CD8-positive, alpha-beta T cell (primary cell): ENCODE measurements at regions of chr19 and their contacts with region 1.

Region 1: DNA sequence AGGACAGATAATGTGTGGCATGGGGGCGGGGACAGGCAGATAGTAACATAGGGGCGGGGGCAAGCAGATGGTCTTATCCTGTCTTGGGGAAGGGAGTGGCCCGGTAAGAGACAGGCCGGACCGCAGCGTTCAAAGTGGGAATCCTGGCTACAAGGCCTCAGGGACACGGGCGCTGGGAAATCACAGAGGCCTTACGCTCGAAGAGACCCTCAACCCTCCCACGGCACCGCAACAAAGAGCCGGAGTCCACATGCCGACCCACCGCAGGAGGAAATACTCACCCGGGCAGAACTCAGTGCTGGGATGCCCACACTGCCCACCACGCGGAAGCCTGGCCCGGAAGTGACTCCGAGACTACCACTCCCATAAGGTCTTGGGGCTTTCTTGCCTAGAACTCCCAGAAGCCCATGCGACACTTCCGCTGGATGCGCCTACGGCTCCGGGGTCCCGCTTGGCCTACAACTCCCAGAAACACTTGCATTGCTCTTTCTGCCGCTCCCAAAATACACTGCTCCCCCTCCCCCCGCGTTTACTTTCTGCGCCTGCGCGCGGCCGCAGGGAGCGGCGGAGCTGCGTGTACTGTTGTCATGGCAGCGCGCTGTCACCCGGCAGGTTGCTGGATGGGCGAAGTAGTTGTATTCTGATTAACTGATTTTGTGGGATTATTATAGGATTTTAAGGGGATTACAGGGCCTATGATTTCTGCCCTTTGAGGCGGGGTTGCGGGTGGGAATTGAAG is at the start of gene CTU1:
- DNase-seq: peak; percentile 97 to 99 (median 98)
- ATAC-seq: peak; percentile 98
- H3K4me3 ChIP-seq: peak within 1 kb of the TSS; percentile 63 to 73
- H3K4me3 Mint-ChIP-seq: peak within 1 kb of the TSS; percentile 97
- H3K27ac ChIP-seq: peak within 1 kb of the TSS; percentile 82 to 88
- H3K27ac Mint-ChIP-seq: peak within 1 kb of the TSS; percentile 96
- H3K4me1 ChIP-seq: peaks cover 19% of the 10 kb centered on the region
- H3K4me1 Mint-ChIP-seq: peaks cover 44% of the 10 kb centered on the region
- H3K27me3 ChIP-seq: no peaks in the 10 kb centered on the region
- H3K27me3 Mint-ChIP-seq: no peaks in the 10 kb centered on the region
- CTCF ChIP-seq: no peak
- total RNA-seq, gene CTU1: 1.7 TPM

Region 2: DNA sequence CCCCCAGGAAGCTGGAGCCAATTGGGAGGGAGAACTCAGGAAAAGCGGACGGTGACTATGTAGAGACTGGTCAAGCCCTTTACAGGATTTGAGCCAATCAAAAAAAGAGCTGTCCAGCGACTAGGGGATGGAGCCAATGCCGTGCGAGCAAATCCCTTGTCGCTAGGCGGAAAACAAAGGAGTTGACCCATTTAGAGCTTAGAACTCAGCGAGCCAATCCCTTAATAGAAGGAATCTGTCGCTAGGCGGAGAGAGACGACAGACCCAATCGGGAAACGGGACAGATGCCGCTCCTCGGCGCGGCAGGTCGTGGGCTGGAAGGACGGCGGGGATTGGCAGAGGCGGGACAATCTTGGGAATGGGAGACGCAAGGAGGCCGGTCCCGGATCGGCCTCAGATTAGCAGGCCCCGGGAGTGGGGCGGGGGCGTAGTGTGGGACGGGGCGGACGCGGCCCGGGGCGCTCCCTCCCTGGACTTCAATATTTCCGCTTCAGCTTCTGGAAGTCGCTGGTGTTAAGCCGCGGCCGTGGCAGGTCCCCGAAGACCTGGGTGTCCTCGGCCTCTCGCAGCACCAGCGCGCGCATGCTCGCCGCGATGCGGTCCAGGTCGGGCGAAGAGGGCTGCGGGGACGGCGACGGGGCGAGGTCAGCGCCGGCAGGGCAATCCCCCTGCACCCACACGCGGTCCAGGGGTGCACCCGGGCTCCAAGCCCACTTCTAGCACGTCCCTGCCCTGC is 1238.6 kb before region 1 on chr19:
- CTCF ChIA-PET with region 1: no interaction called
- POLR2A ChIA-PET with region 1: no interaction called
- intact Hi-C with region 1: loop called in 1 of 2 experiments (anchors 5 kb)
- DNase-seq: peak; percentile 81 to 98 (median 89)
- ATAC-seq: peak; percentile 75
- H3K4me3 ChIP-seq: peak overlapping the region; percentile 73 to 85
- H3K4me3 Mint-ChIP-seq: no peak overlapping the region
- H3K27ac ChIP-seq: peak overlapping the region; percentile 64 to 96
- H3K27ac Mint-ChIP-seq: no peak overlapping the region
- H3K4me1 ChIP-seq: peaks cover 36% of the 10 kb centered on the region
- H3K4me1 Mint-ChIP-seq: peaks cover 41% of the 10 kb centered on the region
- H3K27me3 ChIP-seq: no peaks in the 10 kb centered on the region
- H3K27me3 Mint-ChIP-seq: no peaks in the 10 kb centered on the region
- CTCF ChIP-seq: no peak

Region 3: DNA sequence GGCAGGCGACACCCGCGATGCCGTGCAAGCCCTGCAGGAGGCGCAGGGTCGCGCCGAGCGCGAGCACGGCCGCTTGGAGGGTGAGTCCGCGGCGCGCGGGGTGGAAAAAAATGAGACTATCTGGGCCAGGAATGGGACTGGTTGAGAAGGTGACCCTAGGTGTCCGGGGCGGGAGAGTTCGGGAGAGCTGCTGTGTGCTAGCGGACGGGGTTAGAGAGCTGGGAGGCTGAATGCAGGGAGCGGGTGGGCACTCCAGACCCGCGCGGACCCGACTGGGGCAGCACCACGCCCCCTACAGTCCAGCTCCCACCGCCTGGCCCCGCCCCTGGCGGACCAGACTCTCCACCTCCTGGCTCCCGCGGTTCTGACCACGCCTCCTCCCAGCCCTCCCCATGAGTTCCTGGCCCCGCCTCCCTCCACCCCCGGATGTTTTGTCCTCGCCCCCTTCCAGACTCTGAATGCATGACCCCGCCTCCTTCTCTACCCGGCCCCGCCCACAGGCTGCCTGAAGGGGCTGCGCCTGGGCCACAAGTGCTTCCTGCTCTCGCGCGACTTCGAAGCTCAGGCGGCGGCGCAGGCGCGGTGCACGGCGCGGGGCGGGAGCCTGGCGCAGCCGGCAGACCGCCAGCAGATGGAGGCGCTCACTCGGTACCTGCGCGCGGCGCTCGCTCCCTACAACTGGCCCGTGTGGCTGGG is 383.6 kb before region 1 on chr19:
- CTCF ChIA-PET with region 1: no interaction called
- POLR2A ChIA-PET with region 1: no interaction called
- intact Hi-C with region 1: loop called in 1 of 2 experiments (anchors 10 kb)
- DNase-seq: peak; percentile 84 to 97 (median 94)
- ATAC-seq: peak; percentile 88
- H3K4me3 ChIP-seq: peak overlapping the region; percentile 56 to 81
- H3K4me3 Mint-ChIP-seq: peak overlapping the region; percentile 82
- H3K27ac ChIP-seq: peak overlapping the region; percentile 79 to 89
- H3K27ac Mint-ChIP-seq: peak overlapping the region; percentile 85
- H3K4me1 ChIP-seq: peaks cover 48% of the 10 kb centered on the region
- H3K4me1 Mint-ChIP-seq: peaks cover 46% of the 10 kb centered on the region
- H3K27me3 ChIP-seq: peaks cover 0 to 16% of the 10 kb centered on the region in 2 experiments
- H3K27me3 Mint-ChIP-seq: peaks cover 34% of the 10 kb centered on the region
- CTCF ChIP-seq: peak; percentile 71

Region 4: DNA sequence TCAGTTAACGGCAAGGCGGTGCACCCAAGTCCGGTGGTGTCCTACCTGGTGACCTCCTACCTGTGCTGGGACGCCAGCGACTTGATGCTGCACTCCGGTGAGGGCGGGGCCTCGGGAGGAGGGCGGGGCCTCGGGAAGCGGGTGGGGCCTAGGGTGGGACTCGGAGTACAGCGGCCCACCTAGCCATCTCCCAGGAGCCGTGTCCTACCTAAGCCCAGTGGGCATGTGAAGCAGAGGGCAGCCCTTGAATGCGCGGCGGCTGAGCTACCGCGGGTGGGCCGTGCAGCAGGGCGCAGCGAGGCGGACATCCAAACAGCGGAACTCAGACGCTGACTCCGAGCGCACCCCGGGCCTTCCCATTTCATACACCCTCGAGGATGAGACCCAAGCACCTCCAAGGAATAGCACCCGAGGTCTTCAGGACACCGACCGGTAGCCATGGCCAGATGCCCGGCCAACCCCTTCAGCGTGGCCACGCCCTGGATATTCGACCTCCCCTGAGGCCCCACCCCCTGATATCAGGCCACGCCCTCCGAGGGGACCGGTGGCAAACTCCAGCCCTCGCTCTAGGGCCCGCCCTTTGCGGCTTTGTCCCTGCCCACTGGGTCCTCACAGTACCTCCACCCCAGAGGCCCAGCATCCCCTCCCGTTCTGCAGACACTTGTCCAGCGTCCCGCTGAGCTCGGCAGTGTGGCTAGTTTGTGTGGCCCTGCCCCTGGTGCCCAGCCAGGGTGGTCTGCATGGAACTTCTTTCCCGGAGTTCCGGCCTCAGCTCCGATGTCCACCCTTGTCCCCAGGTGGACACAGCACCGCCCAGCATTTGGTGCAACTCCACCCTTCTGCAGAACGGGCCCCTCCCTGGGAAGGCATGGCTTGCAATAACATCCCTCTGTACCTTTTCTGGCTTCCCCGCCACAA is 290.0 kb before region 1 on chr19:
- CTCF ChIA-PET with region 1: no interaction called
- POLR2A ChIA-PET with region 1: no interaction called
- intact Hi-C with region 1: no loop called
- DNase-seq: peak in 5 of 9 experiments; percentile 26 to 33 (median 29)
- ATAC-seq: peak; percentile 40
- H3K4me3 ChIP-seq: peak overlapping the region; percentile 19 to 37
- H3K4me3 Mint-ChIP-seq: peak overlapping the region; percentile 53
- H3K27ac ChIP-seq: no peak overlapping the region
- H3K27ac Mint-ChIP-seq: no peak overlapping the region
- H3K4me1 ChIP-seq: peaks cover 15% of the 10 kb centered on the region
- H3K4me1 Mint-ChIP-seq: peaks cover 19% of the 10 kb centered on the region
- H3K27me3 ChIP-seq: peaks cover 21 to 25% of the 10 kb centered on the region in 2 experiments
- H3K27me3 Mint-ChIP-seq: peaks cover 72% of the 10 kb centered on the region
- CTCF ChIP-seq: no peak

Region 5: DNA sequence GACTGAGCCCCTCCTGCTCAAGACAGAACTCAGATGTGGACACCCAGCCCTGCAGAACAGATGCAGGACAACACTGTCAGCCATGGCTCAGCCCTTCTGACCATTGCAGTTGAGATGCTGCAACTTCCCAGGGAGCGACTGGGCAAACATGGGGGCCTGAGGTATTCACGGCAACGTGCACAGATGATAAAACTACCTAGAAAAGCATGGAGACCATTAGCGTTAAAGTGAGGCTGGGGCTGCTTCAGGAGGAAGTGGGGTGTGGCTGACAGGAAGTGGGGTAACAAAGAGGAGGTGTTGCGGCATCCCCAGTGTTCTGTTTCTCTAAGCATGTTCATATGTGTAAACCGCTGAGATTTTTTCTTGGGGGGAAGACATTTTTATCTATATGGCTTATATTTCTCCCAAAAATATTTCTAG is 15.2 kb after region 1 on chr19:
- CTCF ChIA-PET with region 1: interaction called, 7 read pairs
- POLR2A ChIA-PET with region 1: no interaction called
- intact Hi-C with region 1: loop called (anchors 1 kb)
- DNase-seq: peak in 8 of 9 experiments; percentile 37 to 85 (median 65)
- ATAC-seq: peak; percentile 93
- H3K4me3 ChIP-seq: peak overlapping the region; percentile 21 to 39
- H3K4me3 Mint-ChIP-seq: peak overlapping the region; percentile 67
- H3K27ac ChIP-seq: peak overlapping the region; percentile 38 to 81
- H3K27ac Mint-ChIP-seq: peak overlapping the region; percentile 80
- H3K4me1 ChIP-seq: peaks cover 83% of the 10 kb centered on the region
- H3K4me1 Mint-ChIP-seq: peaks cover 80% of the 10 kb centered on the region
- H3K27me3 ChIP-seq: no peaks in the 10 kb centered on the region
- H3K27me3 Mint-ChIP-seq: no peaks in the 10 kb centered on the region
- CTCF ChIP-seq: no peak

Region 6: GRCh38 chr19:51168564-51169282 is 60.5 kb after region 1 on chr19:
- CTCF ChIA-PET with region 1: interaction called, 3 read pairs
- POLR2A ChIA-PET with region 1: no interaction called
- intact Hi-C with region 1: loop called in 1 of 2 experiments (anchors 1 kb)
- DNase-seq: no peak
- ATAC-seq: no peak
- H3K4me3 ChIP-seq: no peak overlapping the region
- H3K4me3 Mint-ChIP-seq: no peak overlapping the region
- H3K27ac ChIP-seq: no peak overlapping the region
- H3K27ac Mint-ChIP-seq: no peak overlapping the region
- H3K4me1 ChIP-seq: peaks cover 27% of the 10 kb centered on the region
- H3K4me1 Mint-ChIP-seq: peaks cover 28% of the 10 kb centered on the region
- H3K27me3 ChIP-seq: no peaks in the 10 kb centered on the region
- H3K27me3 Mint-ChIP-seq: no peaks in the 10 kb centered on the region
- CTCF ChIP-seq: no peak

Region 7: GRCh38 chr19:51593969-51594773 is 485.9 kb after region 1 on chr19:
- CTCF ChIA-PET with region 1: no interaction called
- POLR2A ChIA-PET with region 1: no interaction called
- intact Hi-C with region 1: loop called in 1 of 2 experiments (anchors 1 kb)
- DNase-seq: peak; percentile 86 to 97 (median 96)
- ATAC-seq: peak; percentile 100
- H3K4me3 ChIP-seq: peak overlapping the region; percentile 69 to 98
- H3K4me3 Mint-ChIP-seq: peak overlapping the region; percentile 99
- H3K27ac ChIP-seq: peak overlapping the region; percentile 50 to 73
- H3K27ac Mint-ChIP-seq: peak overlapping the region; percentile 87
- H3K4me1 ChIP-seq: peaks cover 18% of the 10 kb centered on the region
- H3K4me1 Mint-ChIP-seq: peaks cover 27% of the 10 kb centered on the region
- H3K27me3 ChIP-seq: no peaks in the 10 kb centered on the region
- H3K27me3 Mint-ChIP-seq: peaks cover 10% of the 10 kb centered on the region
- CTCF ChIP-seq: no peak